ENCODE measurements at regions of chr3 and their contacts with region 1.

Region 1: GRCh38 chr3:47824541-47825473 is 21.9 kb downstream of the DHX30 start:
- DNase-seq: peak; percentile 65 to 86 (median 76)
- H3K4me3 ChIP-seq: peak overlapping the region; percentile 98
- H3K27ac ChIP-seq: peak overlapping the region; percentile 73 to 84
- H3K4me1 ChIP-seq: peaks cover 2% of the 10 kb centered on the region
- H3K27me3 ChIP-seq: no peaks in the 10 kb centered on the region
- CTCF ChIP-seq: peak; percentile 69 to 94 (median 93)
- EP300 ChIP-seq: no peak
- POLR2A ChIP-seq: peak; percentile 26

Region 2: GRCh38 chr3:47899495-47900125 is 74.8 kb after region 1 on chr3:
- intact Hi-C with region 1: no loop called
- DNase-seq: no peak
- H3K4me3 ChIP-seq: no peak overlapping the region
- H3K27ac ChIP-seq: no peak overlapping the region
- H3K4me1 ChIP-seq: no peaks in the 10 kb centered on the region
- H3K27me3 ChIP-seq: no peaks in the 10 kb centered on the region
- CTCF ChIP-seq: no peak
- EP300 ChIP-seq: no peak
- POLR2A ChIP-seq: no peak

Region 3: DNA sequence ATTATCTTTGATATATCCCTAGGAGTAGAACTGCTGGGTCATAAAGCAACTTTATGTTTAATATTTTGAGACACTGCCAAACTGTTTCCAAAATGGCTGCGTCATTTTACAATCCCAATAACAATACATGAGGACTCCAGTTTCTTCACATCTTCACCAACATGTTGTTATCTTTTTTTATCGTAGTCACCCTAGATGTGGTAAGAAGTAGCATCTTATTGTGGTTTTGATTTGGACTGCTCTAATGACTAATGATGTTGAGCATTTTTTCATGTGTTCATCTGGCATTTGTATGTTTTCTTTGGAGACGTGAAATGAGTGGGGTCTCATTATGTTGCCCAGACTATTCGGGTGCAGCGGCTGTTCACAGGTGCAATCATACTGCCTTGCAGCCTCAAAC is 107.6 kb after region 1 on chr3:
- intact Hi-C with region 1: no loop called
- DNase-seq: no peak
- H3K4me3 ChIP-seq: no peak overlapping the region
- H3K27ac ChIP-seq: no peak overlapping the region
- H3K4me1 ChIP-seq: no peaks in the 10 kb centered on the region
- H3K27me3 ChIP-seq: no peaks in the 10 kb centered on the region
- CTCF ChIP-seq: no peak
- EP300 ChIP-seq: no peak
- POLR2A ChIP-seq: no peak

Region 4: DNA sequence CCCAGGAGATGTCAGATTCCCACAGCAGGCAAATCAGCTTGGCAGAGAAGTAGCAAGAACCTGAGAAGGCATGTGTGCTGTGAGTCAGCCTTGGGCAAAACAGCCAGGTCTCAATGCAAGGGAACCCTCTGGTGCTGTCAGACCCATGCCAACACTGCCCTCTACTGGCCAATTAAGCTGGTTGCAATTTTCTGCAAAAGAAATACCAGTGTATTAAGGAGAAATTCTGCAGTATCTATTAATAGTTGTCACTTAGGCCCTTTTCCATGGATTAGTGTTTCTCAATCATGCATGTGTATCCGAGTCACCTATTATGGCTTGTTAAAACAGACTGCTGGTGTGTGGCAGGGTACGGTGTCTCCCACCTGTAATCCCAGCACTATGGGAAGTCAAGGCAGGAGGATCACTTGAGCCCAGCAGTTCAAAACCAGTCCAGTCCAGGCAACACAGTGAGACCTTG is 165.2 kb after region 1 on chr3:
- intact Hi-C with region 1: loop called in 2 of 4 experiments (anchors 5 to 10 kb)
- DNase-seq: peak; percentile 69 to 86 (median 77)
- H3K4me3 ChIP-seq: no peak overlapping the region
- H3K27ac ChIP-seq: no peak overlapping the region
- H3K4me1 ChIP-seq: peaks cover 1% of the 10 kb centered on the region
- H3K27me3 ChIP-seq: no peaks in the 10 kb centered on the region
- CTCF ChIP-seq: peak; percentile 81 to 95 (median 90)
- EP300 ChIP-seq: no peak
- POLR2A ChIP-seq: no peak

Region 5: GRCh38 chr3:48157950-48158376 is 333.2 kb after region 1 on chr3:
- intact Hi-C with region 1: loop called in 2 of 4 experiments (anchors 5 to 10 kb)
- DNase-seq: peak; percentile 50 to 79 (median 64)
- H3K4me3 ChIP-seq: no peak overlapping the region
- H3K27ac ChIP-seq: no peak overlapping the region
- H3K4me1 ChIP-seq: no peaks in the 10 kb centered on the region
- H3K27me3 ChIP-seq: no peaks in the 10 kb centered on the region
- CTCF ChIP-seq: peak in 2 of 3 donors; percentile 29 to 52
- EP300 ChIP-seq: no peak
- POLR2A ChIP-seq: no peak